A673 (cell line): ENCODE measurements at regions of chr12 and their contacts with region 1.

Region 1: GRCh38 chr12:39145175-39145999 is 240.0 kb upstream of the CPNE8 start:
- DNase-seq: peak; percentile 71
- H3K4me3 ChIP-seq: peak overlapping the region; percentile 57
- H3K27ac ChIP-seq: no peak overlapping the region
- H3K4me1 ChIP-seq: no peaks in the 10 kb centered on the region
- H3K27me3 ChIP-seq: peaks cover 9% of the 10 kb centered on the region
- CTCF ChIP-seq: peak; percentile 71

Region 2: DNA sequence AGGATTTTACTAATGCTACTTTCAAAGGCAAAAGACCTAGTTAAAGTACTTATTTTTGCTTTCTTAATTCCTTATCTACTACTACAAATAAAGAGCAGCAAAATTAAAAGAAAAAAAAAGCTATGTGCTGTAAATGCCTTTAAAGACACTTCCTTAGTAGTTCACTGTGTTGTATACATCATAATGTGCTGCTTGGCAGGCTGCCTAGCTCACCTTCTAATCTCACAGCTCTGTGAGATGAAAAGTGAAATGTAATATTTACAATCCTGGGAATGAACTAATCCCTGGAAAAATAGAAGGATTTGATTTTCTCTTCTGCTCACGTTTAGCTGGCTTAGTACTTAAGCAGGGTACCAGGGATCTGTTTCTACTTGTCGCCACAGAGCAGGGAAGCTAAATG is 1013.2 kb before region 1 on chr12:
- CTCF ChIA-PET with region 1: no interaction called
- POLR2A ChIA-PET with region 1: no interaction called
- intact Hi-C with region 1: no loop called
- DNase-seq: no peak
- H3K4me3 ChIP-seq: no peak overlapping the region
- H3K27ac ChIP-seq: no peak overlapping the region
- H3K4me1 ChIP-seq: no peaks in the 10 kb centered on the region
- H3K27me3 ChIP-seq: no peaks in the 10 kb centered on the region
- CTCF ChIP-seq: no peak

Region 3: GRCh38 chr12:38289396-38289795 is 856.0 kb before region 1 on chr12:
- CTCF ChIA-PET with region 1: no interaction called
- POLR2A ChIA-PET with region 1: no interaction called
- intact Hi-C with region 1: no loop called
- DNase-seq: no peak
- H3K4me3 ChIP-seq: no peak overlapping the region
- H3K27ac ChIP-seq: no peak overlapping the region
- H3K4me1 ChIP-seq: no peaks in the 10 kb centered on the region
- H3K27me3 ChIP-seq: no peaks in the 10 kb centered on the region
- CTCF ChIP-seq: no peak

Region 4: GRCh38 chr12:39199351-39199750 is 54.0 kb after region 1 on chr12:
- CTCF ChIA-PET with region 1: no interaction called
- POLR2A ChIA-PET with region 1: no interaction called
- intact Hi-C with region 1: loop called (anchors 5 kb)
- DNase-seq: peak; percentile 94
- H3K4me3 ChIP-seq: peak overlapping the region; percentile 6
- H3K27ac ChIP-seq: peak overlapping the region; percentile 83
- H3K4me1 ChIP-seq: peaks cover 10% of the 10 kb centered on the region
- H3K27me3 ChIP-seq: no peaks in the 10 kb centered on the region
- CTCF ChIP-seq: no peak

Region 5: GRCh38 chr12:39252628-39253027 is 107.2 kb after region 1 on chr12:
- CTCF ChIA-PET with region 1: no interaction called
- POLR2A ChIA-PET with region 1: no interaction called
- intact Hi-C with region 1: loop called (anchors 5 kb)
- DNase-seq: no peak
- H3K4me3 ChIP-seq: no peak overlapping the region
- H3K27ac ChIP-seq: no peak overlapping the region
- H3K4me1 ChIP-seq: no peaks in the 10 kb centered on the region
- H3K27me3 ChIP-seq: no peaks in the 10 kb centered on the region
- CTCF ChIP-seq: no peak